PC-3 (cell line): ENCODE measurements at regions of chr3 and their contacts with region 1.

Region 1: GRCh38 chr3:16290007-16290826 is 25.2 kb downstream of the OXNAD1 start:
- DNase-seq: peak; percentile 73
- ATAC-seq: peak; percentile 80
- H3K4me3 ChIP-seq: no peak overlapping the region
- H3K27ac ChIP-seq: no peak overlapping the region
- H3K4me1 ChIP-seq: no peaks in the 10 kb centered on the region
- H3K27me3 ChIP-seq: no peaks in the 10 kb centered on the region
- CTCF ChIP-seq: peak; percentile 95

Region 2: DNA sequence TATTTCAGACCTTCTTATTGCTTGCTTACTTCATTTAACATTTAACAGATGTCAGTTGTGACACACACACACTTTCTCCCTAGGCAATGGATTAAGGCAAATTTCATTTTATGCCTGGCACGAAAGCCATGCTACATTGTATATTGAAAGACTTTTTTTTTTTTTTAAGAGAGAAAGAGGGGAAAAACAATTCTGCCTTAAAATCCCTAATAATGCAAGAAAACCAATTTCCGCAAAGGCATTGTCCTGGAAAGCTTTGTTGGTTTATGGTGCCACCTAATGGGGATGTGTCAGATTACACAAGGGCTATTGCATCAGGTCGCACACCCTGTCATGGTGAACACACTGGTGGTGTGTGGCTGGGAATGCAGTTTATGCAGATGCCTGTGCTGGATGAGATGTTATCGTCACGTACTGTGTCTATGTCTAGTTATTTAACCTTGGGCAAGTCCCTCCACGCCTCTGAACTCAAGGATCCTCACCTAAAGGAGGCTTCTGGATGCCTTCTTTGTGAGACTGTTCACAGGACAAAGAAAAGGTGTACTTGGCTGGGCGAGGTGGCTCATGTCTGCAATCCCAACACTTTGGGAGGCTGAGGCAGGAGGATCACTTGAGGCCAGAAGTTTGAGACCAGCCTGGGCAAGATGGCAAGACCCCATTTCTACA is 260.6 kb after region 1 on chr3:
- CTCF ChIA-PET with region 1: interaction called, 17 read pairs
- POLR2A ChIA-PET with region 1: no interaction called
- intact Hi-C with region 1: loop called (anchors 1 kb)
- DNase-seq: peak; percentile 92
- ATAC-seq: peak; percentile 95
- H3K4me3 ChIP-seq: peak overlapping the region; percentile 22; the same call in 1 of the 2 replicates
- H3K27ac ChIP-seq: no peak overlapping the region
- H3K4me1 ChIP-seq: peaks cover 8% of the 10 kb centered on the region
- H3K27me3 ChIP-seq: no peaks in the 10 kb centered on the region
- CTCF ChIP-seq: peak; percentile 95

Region 3: GRCh38 chr3:17233398-17233800 is 943.2 kb after region 1 on chr3:
- CTCF ChIA-PET with region 1: no interaction called
- POLR2A ChIA-PET with region 1: no interaction called
- intact Hi-C with region 1: loop called (anchors 5 kb)
- DNase-seq: peak; percentile 97
- ATAC-seq: peak; percentile 99
- H3K4me3 ChIP-seq: no peak overlapping the region
- H3K27ac ChIP-seq: no peak overlapping the region
- H3K4me1 ChIP-seq: peaks cover 18% of the 10 kb centered on the region
- H3K27me3 ChIP-seq: no peaks in the 10 kb centered on the region
- CTCF ChIP-seq: peak; percentile 93